ENCODE measurements at regions of chr9 and their contacts with region 1.

Region 1: GRCh38 chr9:68653141-68653595 is 51.9 kb upstream of the PIP5K1B start:
- DNase-seq: peak; percentile 12
- H3K4me3 Mint-ChIP-seq: peak overlapping the region; percentile 35
- H3K27ac Mint-ChIP-seq: peak overlapping the region; percentile 88
- H3K4me1 Mint-ChIP-seq: peaks cover 52% of the 10 kb centered on the region
- H3K27me3 Mint-ChIP-seq: peaks cover 4% of the 10 kb centered on the region

Region 2: DNA sequence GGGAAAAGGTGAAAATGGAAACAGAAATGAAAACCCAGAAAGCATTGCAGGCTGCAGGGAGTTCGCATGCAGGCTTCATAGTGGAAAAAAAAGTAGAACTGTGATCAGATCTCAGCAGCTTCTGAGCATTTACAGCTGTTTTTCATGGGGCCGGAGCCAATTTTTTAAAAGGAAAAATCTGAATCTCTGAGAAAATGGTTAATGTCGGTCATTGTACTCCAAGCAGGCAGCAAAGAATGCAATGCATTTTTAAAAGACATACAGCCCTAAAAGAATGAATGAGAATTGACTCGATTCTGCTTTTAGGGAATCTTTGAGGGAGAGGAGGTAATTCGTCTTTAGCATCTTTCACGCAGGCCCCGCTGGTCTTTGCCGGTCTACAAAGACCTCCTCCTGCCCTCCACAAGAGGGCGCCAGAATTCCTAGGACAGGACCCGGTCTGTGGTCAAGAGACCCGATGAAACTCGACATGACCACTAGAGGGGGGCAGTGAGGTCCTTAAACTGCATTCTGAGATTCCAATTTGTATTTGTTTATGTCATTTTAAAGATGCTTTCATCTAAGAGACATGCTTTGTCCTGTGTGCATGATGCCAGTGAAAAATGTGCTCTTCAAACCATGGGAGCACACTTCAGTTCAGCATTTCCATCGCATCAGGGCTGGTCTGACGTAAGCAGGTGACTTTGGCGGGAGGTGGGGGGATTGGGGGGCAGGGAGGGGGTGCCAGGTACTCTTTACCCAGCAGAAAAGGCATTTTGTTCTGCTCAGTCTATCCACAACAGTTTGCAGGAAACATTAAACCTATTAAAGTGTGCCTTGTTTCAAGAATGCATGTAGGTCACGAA is 68.8 kb before region 1 on chr9:
- intact Hi-C with region 1: loop called (anchors 1 kb)
- DNase-seq: peak; percentile 74
- H3K4me3 Mint-ChIP-seq: no peak overlapping the region
- H3K27ac Mint-ChIP-seq: no peak overlapping the region
- H3K4me1 Mint-ChIP-seq: peaks cover 11% of the 10 kb centered on the region
- H3K27me3 Mint-ChIP-seq: peaks cover 6% of the 10 kb centered on the region

Region 3: GRCh38 chr9:68762570-68762969 is 109.4 kb after region 1 on chr9:
- intact Hi-C with region 1: loop called (anchors 5 kb)
- DNase-seq: no peak
- H3K4me3 Mint-ChIP-seq: no peak overlapping the region
- H3K27ac Mint-ChIP-seq: no peak overlapping the region
- H3K4me1 Mint-ChIP-seq: peaks cover 14% of the 10 kb centered on the region
- H3K27me3 Mint-ChIP-seq: peaks cover 6% of the 10 kb centered on the region

Region 4: DNA sequence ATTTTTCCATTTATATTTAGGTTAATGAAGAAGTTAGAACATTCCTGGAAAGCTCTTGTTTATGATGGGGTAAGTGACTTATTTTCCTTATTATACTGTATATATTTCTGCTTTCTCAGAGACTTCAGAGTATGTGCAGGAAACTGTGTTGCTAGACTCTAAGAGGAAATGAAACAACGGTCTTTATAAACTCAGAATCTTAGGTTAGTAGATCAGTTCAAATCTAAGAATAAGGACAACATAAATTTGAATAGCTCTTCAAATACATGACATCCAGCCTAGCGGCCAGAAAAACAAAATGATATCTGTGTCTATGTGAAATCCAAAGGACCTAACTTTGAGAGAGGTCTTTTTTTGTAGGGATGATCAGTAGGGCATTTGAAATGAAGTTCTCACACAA is 266.5 kb after region 1 on chr9:
- intact Hi-C with region 1: loop called (anchors 1 kb)
- DNase-seq: no peak
- H3K4me3 Mint-ChIP-seq: no peak overlapping the region
- H3K27ac Mint-ChIP-seq: no peak overlapping the region
- H3K4me1 Mint-ChIP-seq: peaks cover 45% of the 10 kb centered on the region
- H3K27me3 Mint-ChIP-seq: peaks cover 3% of the 10 kb centered on the region

Region 5: GRCh38 chr9:68979538-68980314 is 326.6 kb after region 1 on chr9:
- intact Hi-C with region 1: loop called (anchors 1 kb)
- DNase-seq: peak; percentile 38
- H3K4me3 Mint-ChIP-seq: peak overlapping the region; percentile 69
- H3K27ac Mint-ChIP-seq: peak overlapping the region; percentile 97
- H3K4me1 Mint-ChIP-seq: peaks cover 85% of the 10 kb centered on the region
- H3K27me3 Mint-ChIP-seq: peaks cover 2% of the 10 kb centered on the region

Region 6: GRCh38 chr9:69174616-69175463 is 521.7 kb after region 1 on chr9:
- intact Hi-C with region 1: loop called (anchors 2 kb)
- DNase-seq: peak; percentile 21
- H3K4me3 Mint-ChIP-seq: peak overlapping the region; percentile 82
- H3K27ac Mint-ChIP-seq: peak overlapping the region; percentile 69
- H3K4me1 Mint-ChIP-seq: peaks cover 70% of the 10 kb centered on the region
- H3K27me3 Mint-ChIP-seq: peaks cover 18% of the 10 kb centered on the region